ENCODE measurements at regions of chr13 and their contacts with region 1.

Region 1: GRCh38 chr13:110216398-110217041 is 90.4 kb downstream of the COL4A1 start:
- DNase-seq: peak; percentile 78
- ATAC-seq: peak; percentile 56
- H3K4me3 ChIP-seq: no peak overlapping the region
- H3K27ac ChIP-seq: no peak overlapping the region
- H3K4me1 ChIP-seq: peaks cover 25% of the 10 kb centered on the region
- H3K27me3 ChIP-seq: no peaks in the 10 kb centered on the region
- CTCF ChIP-seq: no peak
- POLR2A ChIP-seq: no peak
- RAD21 ChIP-seq: no peak

Region 2: GRCh38 chr13:109249780-109250528 is 966.6 kb before region 1 on chr13:
- CTCF ChIA-PET with region 1: no interaction called
- POLR2A ChIA-PET with region 1: no interaction called
- dilution Hi-C with region 1: no loop called
- in situ Hi-C with region 1: no loop called
- intact Hi-C with region 1: no loop called
- DNase-seq: no peak
- ATAC-seq: no peak
- H3K4me3 ChIP-seq: no peak overlapping the region
- H3K27ac ChIP-seq: no peak overlapping the region
- H3K4me1 ChIP-seq: no peaks in the 10 kb centered on the region
- H3K27me3 ChIP-seq: no peaks in the 10 kb centered on the region
- CTCF ChIP-seq: no peak
- POLR2A ChIP-seq: no peak
- RAD21 ChIP-seq: no peak

Region 3: GRCh38 chr13:110433014-110433413 is 216.5 kb after region 1 on chr13:
- CTCF ChIA-PET with region 1: no interaction called
- POLR2A ChIA-PET with region 1: no interaction called
- dilution Hi-C with region 1: no loop called
- in situ Hi-C with region 1: loop called (anchors 10 kb)
- intact Hi-C with region 1: no loop called
- DNase-seq: no peak
- ATAC-seq: no peak
- H3K4me3 ChIP-seq: no peak overlapping the region
- H3K27ac ChIP-seq: no peak overlapping the region
- H3K4me1 ChIP-seq: no peaks in the 10 kb centered on the region
- H3K27me3 ChIP-seq: no peaks in the 10 kb centered on the region
- CTCF ChIP-seq: no peak
- POLR2A ChIP-seq: no peak
- RAD21 ChIP-seq: no peak

Region 4: DNA sequence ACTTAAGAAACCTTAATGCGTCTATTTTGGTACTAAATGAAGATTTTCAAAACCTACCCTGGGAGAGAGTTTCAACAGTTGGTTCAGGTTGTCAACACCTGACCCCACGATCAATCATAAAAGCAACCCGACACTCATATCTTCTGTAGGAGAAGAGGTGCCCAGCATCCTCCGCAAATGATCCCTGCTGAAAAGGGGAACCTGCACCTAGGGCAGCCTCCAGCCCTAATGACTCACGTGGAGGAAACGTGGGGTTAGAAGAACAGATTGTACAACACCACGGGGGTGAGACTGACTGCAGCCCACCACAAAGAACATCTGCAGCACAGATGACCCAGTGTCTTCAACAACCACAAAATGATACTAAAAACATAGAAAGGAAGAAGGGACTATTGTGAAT is 228.7 kb after region 1 on chr13:
- CTCF ChIA-PET with region 1: interaction called, 3 read pairs
- POLR2A ChIA-PET with region 1: no interaction called
- dilution Hi-C with region 1: no loop called
- in situ Hi-C with region 1: no loop called
- intact Hi-C with region 1: loop called (anchors 5 kb)
- DNase-seq: peak; percentile 77
- ATAC-seq: no peak
- H3K4me3 ChIP-seq: no peak overlapping the region
- H3K27ac ChIP-seq: no peak overlapping the region; the same call in 1 of the 2 replicates
- H3K4me1 ChIP-seq: peaks cover 29% of the 10 kb centered on the region
- H3K27me3 ChIP-seq: no peaks in the 10 kb centered on the region
- CTCF ChIP-seq: no peak
- POLR2A ChIP-seq: no peak
- RAD21 ChIP-seq: no peak